Heart right ventricle (tissue), 16 donors: ENCODE measurements at regions of chr16 and their contacts with region 1.

Region 1: DNA sequence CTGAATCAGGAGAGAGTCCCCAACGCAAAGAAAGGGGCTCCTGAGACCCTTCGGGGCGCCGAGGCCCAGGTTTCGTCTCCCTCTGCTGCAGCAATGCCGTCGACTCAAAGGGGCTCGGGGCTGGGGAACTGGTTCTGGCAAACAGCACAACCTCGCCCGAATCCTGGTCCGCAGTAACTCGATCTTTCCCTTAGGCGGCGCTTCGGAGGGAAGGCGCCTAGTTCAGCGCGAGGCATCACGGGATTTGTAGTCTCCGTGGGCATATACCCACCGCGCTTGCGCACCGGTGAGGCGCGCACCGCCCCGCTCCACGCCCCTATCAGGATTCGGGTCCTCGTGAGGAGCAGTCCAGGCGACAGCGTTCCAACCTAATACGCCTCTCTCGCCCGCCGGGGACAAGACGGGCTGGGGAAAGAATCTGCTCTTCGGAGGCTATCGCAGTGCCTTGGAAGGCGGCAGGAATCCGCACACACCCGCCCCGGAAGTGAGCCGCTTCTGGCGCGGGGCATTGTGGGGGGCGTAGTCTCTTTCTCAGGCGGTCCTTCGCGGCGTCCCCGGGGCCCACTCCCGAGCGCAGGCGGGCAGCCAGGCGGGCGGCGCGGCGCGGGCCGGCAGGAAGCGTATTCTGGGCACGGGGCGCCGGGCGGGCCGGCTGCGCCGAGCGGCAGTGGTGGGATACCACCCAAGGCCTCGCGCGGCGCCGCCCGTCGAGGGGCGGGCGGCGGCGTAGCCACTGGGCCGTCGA is at the start of gene THAP11:
- DNase-seq: peak; percentile 92 to 95
- ATAC-seq: peak; percentile 76 to 90 (median 80)
- H3K4me3 ChIP-seq: peak within 1 kb of the TSS; percentile 57 to 96 (median 89)
- H3K27ac ChIP-seq: peak within 1 kb of the TSS; percentile 96 to 100 (median 100)
- H3K4me1 ChIP-seq: peaks cover 17 to 46% (median 42%) of the 10 kb centered on the region in 9 donors
- H3K27me3 ChIP-seq: no peaks in the 10 kb centered on the region
- CTCF ChIP-seq: peak; percentile 76 to 91 (median 85)
- total RNA-seq, gene THAP11: 20.6 to 41.3 (median 26.9) TPM

Region 2: GRCh38 chr16:67561824-67562525 is 280.0 kb before region 1 on chr16:
- intact Hi-C with region 1: loop called in 1 of 10 experiments (anchors 5 kb)
- DNase-seq: peak; percentile 97
- ATAC-seq: peak; percentile 90 to 97 (median 95)
- H3K4me3 ChIP-seq: peak overlapping the region; percentile 26 to 100 (median 98)
- H3K27ac ChIP-seq: peak overlapping the region; percentile 99 to 100 (median 100)
- H3K4me1 ChIP-seq: peaks cover 6 to 48% (median 36%) of the 10 kb centered on the region in 9 donors
- H3K27me3 ChIP-seq: no peaks in the 10 kb centered on the region
- CTCF ChIP-seq: no peak

Region 3: GRCh38 chr16:67806428-67807147 is 35.3 kb before region 1 on chr16 and contains the starts of genes RANBP10 and TSNAXIP1:
- intact Hi-C with region 1: loop called in 3 of 10 experiments (anchors 5 kb)
- DNase-seq: peak; percentile 95 to 98
- ATAC-seq: peak; percentile 97 to 99 (median 98)
- H3K4me3 ChIP-seq: peak within 1 kb of the TSS; percentile 54 to 100 (median 91)
- H3K27ac ChIP-seq: peak within 1 kb of the TSS in 9 of 10 donors; percentile 77 to 94 (median 87)
- H3K4me1 ChIP-seq: peaks cover 8 to 39% (median 20%) of the 10 kb centered on the region in 9 donors
- H3K27me3 ChIP-seq: no peaks in the 10 kb centered on the region
- CTCF ChIP-seq: no peak
- total RNA-seq, gene RANBP10: 11.1 to 21.6 (median 15.6) TPM
- total RNA-seq, gene TSNAXIP1: 0.15 to 1.1 (median 0.48) TPM

Region 4: DNA sequence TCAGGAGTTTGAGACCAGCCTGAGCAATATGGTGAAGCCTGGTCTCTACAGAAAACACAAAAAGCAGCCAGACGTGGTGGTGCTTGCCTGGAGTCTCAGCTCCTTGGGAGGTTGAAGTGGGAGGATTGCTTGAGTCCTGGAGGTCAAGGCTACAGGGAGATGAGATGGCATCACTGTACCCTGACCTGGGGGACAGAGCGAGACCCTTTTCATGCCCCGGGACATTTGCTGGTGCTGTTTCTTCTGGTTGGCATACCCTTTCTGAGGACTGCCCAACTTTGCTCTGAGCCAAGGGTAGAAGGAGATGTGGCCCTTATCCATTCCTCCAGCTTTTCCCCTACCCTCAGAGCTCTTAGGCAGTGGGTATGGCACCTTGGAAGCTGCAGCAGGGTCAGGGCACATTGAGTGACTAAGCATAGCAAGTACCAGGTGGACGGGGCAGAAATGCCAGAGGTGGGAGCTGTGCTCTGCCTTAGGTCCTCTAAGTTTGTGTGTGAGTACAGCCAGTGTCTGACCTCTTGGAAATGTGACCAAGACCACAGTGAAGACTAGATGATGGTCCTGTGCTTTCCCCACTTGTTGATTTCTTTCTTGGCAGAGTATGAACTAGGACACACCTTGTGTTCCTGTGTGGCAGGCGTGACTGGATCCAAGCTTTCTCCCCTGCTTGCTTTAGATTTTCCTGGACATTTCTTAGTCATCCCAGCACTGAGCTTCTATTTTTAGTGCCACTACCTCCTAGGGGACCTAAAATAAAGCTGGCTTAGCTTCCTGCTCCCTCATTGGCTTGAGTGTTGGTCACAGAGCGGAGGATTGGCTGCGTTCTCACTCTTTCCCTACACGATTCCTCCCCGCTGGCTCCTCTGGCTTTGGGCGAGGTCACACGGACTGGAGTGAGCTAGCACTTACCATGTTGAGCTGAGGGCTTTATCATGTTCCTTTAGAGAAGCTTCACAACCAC is 21.0 kb after region 1 on chr16:
- intact Hi-C with region 1: loop called in 2 of 10 experiments (anchors 2 kb)
- DNase-seq: peak; percentile 76 to 89
- ATAC-seq: peak; percentile 88 to 95 (median 94)
- H3K4me3 ChIP-seq: peak overlapping the region in 5 of 10 donors; percentile 10 to 25 (median 12)
- H3K27ac ChIP-seq: peak overlapping the region; percentile 80 to 93 (median 90)
- H3K4me1 ChIP-seq: peaks cover 35 to 69% (median 59%) of the 10 kb centered on the region in 9 donors
- H3K27me3 ChIP-seq: no peaks in the 10 kb centered on the region
- CTCF ChIP-seq: no peak

Region 5: GRCh38 chr16:67872786-67873537 is 31.0 kb after region 1 on chr16 and contains the start of gene EDC4:
- intact Hi-C with region 1: loop called in 3 of 10 experiments (anchors 2 to 5 kb)
- DNase-seq: peak; percentile 89 to 90
- ATAC-seq: peak; percentile 91 to 95 (median 93)
- H3K4me3 ChIP-seq: peak within 1 kb of the TSS; percentile 79 to 100 (median 97)
- H3K27ac ChIP-seq: peak within 1 kb of the TSS; percentile 43 to 93 (median 90)
- H3K4me1 ChIP-seq: peaks cover 17 to 41% (median 31%) of the 10 kb centered on the region in 9 donors
- H3K27me3 ChIP-seq: no peaks in the 10 kb centered on the region
- CTCF ChIP-seq: peak in 1 of 9 donors; percentile 9
- total RNA-seq, gene EDC4: 25.8 to 41.6 (median 31.3) TPM

Region 6: GRCh38 chr16:67883872-67884261 is 41.9 kb after region 1 on chr16:
- intact Hi-C with region 1: loop called in 1 of 10 experiments (anchors 5 kb)
- DNase-seq: peak; percentile 36 to 70
- ATAC-seq: peak in 7 of 8 donors; percentile 27 to 75 (median 48)
- H3K4me3 ChIP-seq: no peak overlapping the region
- H3K27ac ChIP-seq: peak overlapping the region in 7 of 10 donors; percentile 18 to 91 (median 80)
- H3K4me1 ChIP-seq: peaks cover 19 to 55% (median 25%) of the 10 kb centered on the region in 9 donors
- H3K27me3 ChIP-seq: no peaks in the 10 kb centered on the region
- CTCF ChIP-seq: peak; percentile 17 to 91 (median 87)

Region 7: DNA sequence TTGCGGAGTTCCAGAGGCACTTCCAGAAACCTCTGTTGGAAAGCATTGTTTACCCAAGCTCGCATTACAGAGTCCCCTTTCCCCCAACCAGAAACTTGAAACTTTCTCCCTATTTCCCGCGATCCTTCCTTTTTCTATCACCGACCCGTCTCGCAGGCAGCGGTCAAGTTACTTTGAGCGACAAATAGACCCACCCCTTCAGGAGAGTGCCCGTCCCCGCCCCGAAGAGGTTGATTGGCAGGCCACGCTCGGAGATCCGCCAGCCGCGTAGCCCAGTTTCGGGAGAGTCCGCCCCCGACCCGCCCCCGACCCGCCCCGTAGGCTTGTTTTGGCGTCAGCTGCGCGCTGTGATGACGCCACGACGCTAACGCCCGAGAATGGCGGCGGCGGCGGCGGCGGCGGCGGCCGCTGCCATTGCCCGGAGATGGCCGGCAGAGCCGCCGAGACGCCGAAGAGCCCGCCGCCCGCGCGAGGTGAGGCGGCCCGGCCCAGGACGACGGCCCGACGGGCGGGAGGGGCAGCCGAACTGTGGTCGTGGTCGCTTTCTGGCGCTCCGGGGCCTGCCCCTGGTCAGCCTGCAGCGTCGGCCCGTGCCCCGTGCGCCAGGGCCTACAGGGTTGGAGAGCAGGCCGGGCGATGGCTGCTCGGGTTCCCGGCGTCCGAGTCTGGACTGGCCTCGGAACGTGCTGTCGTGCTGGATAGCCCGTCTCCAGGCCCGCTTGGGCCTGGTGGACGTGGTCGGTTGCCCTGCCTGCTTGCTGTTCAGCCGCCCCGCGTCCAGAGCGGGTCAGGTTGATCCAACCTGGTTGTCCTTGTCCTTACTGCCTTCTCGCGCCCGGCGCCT is 51.2 kb after region 1 on chr16 and contains the start of gene PSKH1:
- intact Hi-C with region 1: loop called in 1 of 10 experiments (anchors 5 kb)
- DNase-seq: peak; percentile 97 to 98
- ATAC-seq: peak; percentile 96 to 99 (median 99)
- H3K4me3 ChIP-seq: peak within 1 kb of the TSS; percentile 72 to 100 (median 96)
- H3K27ac ChIP-seq: peak within 1 kb of the TSS; percentile 87 to 99 (median 97)
- H3K4me1 ChIP-seq: peaks cover 13 to 55% (median 52%) of the 10 kb centered on the region in 9 donors
- H3K27me3 ChIP-seq: no peaks in the 10 kb centered on the region
- CTCF ChIP-seq: no peak
- total RNA-seq, gene PSKH1: 16.0 to 24.5 (median 20.5) TPM